ENCODE measurements at regions of chr19 and their contacts with region 1.

Region 1: DNA sequence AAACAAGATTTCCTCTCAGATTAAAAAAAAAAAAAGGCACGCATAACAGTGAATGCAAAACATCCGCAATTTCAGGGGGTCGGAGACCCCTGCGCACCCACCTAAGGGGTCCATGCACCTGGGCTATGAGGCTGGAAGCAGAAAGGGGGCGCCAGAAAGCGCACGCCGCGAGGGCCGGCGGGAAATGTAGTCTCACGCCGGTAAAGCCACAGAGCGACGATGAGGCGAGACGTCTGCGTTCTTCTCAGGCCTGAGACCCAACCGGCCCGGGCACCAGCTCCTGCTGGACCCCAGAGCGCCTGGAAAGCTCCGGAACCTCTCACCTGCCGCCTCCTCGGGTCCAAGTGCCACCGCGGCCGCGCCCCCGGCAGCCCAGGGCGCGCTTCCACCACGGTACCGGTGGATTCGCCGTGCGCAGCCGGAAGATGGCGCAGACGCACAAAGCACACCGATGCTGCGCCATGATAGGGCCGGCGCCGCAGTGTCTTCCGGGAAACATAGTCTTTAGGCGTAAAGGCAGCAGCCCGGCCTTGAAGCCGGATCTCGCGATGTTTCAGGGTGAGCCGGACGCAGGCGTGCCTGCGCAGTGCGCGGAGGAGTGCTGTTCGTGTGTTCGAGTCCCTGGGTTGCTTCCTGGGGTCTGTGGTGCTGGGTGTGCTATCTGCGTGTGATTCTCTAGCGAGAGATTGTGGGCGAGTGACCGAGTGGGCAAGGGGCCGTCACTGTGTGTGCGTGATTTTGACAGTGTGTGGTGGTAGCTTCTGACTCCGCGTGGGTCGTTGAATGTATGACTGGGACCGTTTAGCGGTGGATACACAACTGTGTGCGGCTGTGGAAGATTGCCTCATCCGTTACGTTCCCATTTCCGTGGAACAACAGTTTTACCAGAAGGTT is at the start of gene ZNF582:
- DNase-seq: peak; percentile 85
- H3K4me3 Mint-ChIP-seq: peak within 1 kb of the TSS; percentile 85
- H3K27ac Mint-ChIP-seq: peak within 1 kb of the TSS; percentile 85
- H3K4me1 Mint-ChIP-seq: peaks cover 3% of the 10 kb centered on the region
- H3K27me3 Mint-ChIP-seq: no peaks in the 10 kb centered on the region
- total RNA-seq, gene ZNF582: 1.3 and 1.4 TPM in 2 replicates

Region 2: DNA sequence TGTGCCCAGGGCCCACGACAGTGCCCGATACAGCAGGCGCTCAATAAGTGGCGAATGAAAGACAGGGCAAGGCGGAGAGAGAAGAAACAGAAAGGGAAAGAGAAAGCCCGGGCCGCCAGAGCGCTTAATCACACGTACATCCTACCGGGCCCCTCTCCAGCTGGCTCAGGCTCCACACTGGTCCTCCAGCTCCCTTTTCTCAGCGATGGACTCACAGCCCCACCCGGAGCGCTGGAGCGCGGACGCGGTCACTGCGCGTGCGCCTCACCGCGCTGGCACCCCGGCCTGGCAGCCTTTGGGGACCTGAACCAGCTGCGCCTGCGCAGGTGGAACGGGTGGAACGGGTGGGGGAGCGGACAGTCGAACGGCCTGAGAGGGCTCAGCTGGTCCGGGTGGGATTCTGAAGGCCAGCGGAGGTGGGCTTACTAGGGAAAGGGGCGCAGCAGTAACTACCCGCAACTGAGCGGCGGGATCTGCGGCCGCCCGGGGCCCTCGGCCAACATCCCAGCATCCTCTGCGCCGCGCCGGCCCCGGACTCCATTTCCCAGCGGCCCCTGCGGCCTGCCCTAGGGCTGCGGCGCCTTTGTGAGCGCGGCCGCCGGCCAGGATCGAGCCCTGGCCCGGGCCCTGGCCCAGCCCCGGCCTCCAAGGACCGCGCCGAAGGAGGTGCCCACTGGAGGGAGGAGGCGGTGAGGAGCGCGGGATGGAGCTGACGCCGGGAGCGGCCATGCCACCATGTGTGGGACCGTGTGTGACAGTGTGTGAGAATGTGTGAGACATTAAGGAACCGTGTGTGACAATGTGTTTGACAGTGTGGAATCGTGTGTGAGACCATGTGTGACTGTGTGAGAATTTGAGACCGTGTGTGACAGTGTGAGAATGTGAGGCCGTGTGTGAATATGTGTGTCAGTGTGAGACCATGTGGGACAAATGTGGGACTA is 10.7 kb after region 1 on chr19 and contains the start of gene ZNF583:
- intact Hi-C with region 1: loop called (anchors 1 kb)
- DNase-seq: peak; percentile 86
- H3K4me3 Mint-ChIP-seq: peak within 1 kb of the TSS; percentile 85
- H3K27ac Mint-ChIP-seq: peak within 1 kb of the TSS; percentile 96
- H3K4me1 Mint-ChIP-seq: peaks cover 14% of the 10 kb centered on the region
- H3K27me3 Mint-ChIP-seq: no peaks in the 10 kb centered on the region
- total RNA-seq, gene ZNF583: 1.5 and 1.7 TPM in 2 replicates

Region 3: DNA sequence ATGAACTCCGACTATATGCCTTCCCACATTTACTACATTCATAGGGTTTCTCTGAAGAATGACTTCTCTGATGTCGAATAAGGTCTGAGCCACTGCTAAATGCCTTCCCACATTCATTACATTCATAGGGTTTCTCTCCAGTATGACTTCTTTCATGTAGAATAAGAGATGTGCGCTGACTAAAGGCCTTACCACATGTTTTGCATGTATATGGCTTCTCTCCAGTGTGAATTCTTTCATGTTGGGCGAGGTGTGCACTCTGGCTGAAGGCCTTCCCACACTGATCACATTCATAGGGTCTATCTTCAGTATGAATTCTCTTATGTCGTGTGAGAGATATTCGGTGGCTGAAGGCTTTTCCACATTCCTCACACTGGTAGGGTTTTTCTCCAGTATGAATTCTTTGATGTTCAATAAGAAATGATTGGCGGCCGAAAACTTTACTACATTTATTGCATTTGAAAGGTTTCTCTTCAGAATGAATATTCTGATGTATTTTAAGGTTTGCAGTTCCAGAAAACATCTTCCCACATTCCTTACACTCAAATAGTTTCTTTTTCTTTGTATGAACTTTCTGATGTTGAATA is 47.9 kb after region 1 on chr19:
- intact Hi-C with region 1: no loop called
- DNase-seq: no peak
- H3K4me3 Mint-ChIP-seq: no peak overlapping the region
- H3K27ac Mint-ChIP-seq: no peak overlapping the region
- H3K4me1 Mint-ChIP-seq: no peaks in the 10 kb centered on the region
- H3K27me3 Mint-ChIP-seq: no peaks in the 10 kb centered on the region

Measured in activated T-helper 2 cell treated with anti-CD3 and anti-CD28 coated beads, Interferon-gamma antibody, Interleukin-2, Interleukin-4, amounts not matched to agents 10 μg/mL and 5 μg/mL and 100 μg/mL, durations not matched to agents 14 hours and 24 hours and 36 hours (primary cell).